Activated CD4-positive, alpha-beta T cell treated with anti-CD3 and anti-CD28 coated beads, Interleukin-2, amount 10 ng/mL, durations not matched to agents 7 days and 5 days (primary cell): ENCODE measurements at regions of chr21 and their contacts with region 1.

Region 1: GRCh38 chr21:34613679-34614632 is 957 bp downstream of the RCAN1 start:
- DNase-seq: no peak
- H3K4me3 Mint-ChIP-seq: peak overlapping the region; percentile 80
- H3K27ac Mint-ChIP-seq: peak overlapping the region; percentile 79
- H3K4me1 Mint-ChIP-seq: peaks cover 26% of the 10 kb centered on the region
- H3K27me3 Mint-ChIP-seq: peaks cover 18% of the 10 kb centered on the region

Region 2: GRCh38 chr21:34603002-34603709 is 10.8 kb before region 1 on chr21:
- CTCF ChIA-PET with region 1: interaction called, 12 read pairs
- POLR2A ChIA-PET with region 1: no interaction called
- DNase-seq: peak; percentile 66
- H3K4me3 Mint-ChIP-seq: no peak overlapping the region
- H3K27ac Mint-ChIP-seq: no peak overlapping the region
- H3K4me1 Mint-ChIP-seq: no peaks in the 10 kb centered on the region
- H3K27me3 Mint-ChIP-seq: no peaks in the 10 kb centered on the region